Stomach (tissue), 19 donors: ENCODE measurements at regions of chr16 and their contacts with region 1.

Region 1: GRCh38 chr16:25051406-25052150 is 36.4 kb upstream of the ARHGAP17 start:
- DNase-seq: no peak
- H3K4me3 ChIP-seq: peak overlapping the region in 3 of 4 donors; percentile 19 to 32 (median 27)
- H3K27ac ChIP-seq: peak overlapping the region in 4 of 5 donors; percentile 47 to 95 (median 78)
- H3K4me1 ChIP-seq: peaks cover 17 to 57% (median 30%) of the 10 kb centered on the region in 4 donors
- H3K27me3 ChIP-seq: no peaks in the 10 kb centered on the region
- CTCF ChIP-seq: no peak
- EP300 ChIP-seq: no peak
- POLR2A ChIP-seq: no peak

Region 2: DNA sequence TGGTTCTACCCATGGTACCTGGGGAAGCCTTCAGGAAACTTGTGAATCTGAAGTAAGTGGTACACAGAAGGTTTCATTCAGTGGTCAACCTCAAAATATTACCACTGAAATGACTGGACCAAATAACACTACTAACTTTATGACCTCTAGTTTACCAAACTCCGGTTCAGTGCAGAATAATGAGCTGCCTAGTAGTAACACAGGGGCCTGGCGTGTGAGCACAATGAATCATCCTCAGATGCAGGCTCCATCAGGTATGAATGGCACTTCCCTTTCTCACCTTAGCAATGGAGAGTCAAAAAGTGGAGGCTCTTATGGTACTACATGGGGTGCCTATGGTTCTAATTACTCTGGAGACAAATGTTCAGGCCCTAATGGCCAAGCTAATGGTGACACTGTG is 261.7 kb before region 1 on chr16:
- intact Hi-C with region 1: no loop called
- DNase-seq: no peak
- H3K4me3 ChIP-seq: no peak overlapping the region
- H3K27ac ChIP-seq: no peak overlapping the region
- H3K4me1 ChIP-seq: no peaks in the 10 kb centered on the region
- H3K27me3 ChIP-seq: no peaks in the 10 kb centered on the region
- CTCF ChIP-seq: no peak
- EP300 ChIP-seq: no peak
- POLR2A ChIP-seq: no peak

Region 3: DNA sequence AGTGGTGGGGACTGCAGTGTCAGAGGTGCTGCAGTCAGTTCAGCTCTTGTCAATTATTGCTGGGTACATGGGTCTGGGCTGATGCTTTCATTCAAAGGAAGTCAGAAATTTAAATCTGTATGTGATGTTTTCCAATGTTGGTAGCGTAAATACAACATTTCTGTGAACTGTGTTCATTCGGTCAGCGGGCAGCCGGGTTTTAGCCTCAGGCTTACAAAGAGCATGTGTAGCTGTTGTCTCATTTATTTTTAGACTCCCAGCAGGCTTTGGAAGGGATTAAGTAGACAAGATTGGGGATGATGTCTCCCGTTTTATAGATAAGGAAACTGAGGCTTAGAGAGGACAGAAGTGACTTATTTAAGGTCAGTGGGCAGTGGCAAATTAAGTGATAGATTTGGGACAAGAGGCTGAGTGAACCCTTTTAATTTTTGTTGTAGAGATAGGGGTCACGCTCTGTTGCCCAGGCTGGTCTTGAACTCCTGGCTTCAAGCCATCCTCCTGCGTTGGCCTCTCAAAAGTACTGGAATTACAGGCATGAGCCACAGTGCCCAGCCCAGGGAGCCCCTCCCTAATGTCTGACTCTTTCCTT is 173.2 kb after region 1 on chr16:
- intact Hi-C with region 1: loop called (anchors 5 kb)
- DNase-seq: no peak
- H3K4me3 ChIP-seq: no peak overlapping the region
- H3K27ac ChIP-seq: no peak overlapping the region
- H3K4me1 ChIP-seq: peaks cover 0 to 11% (median 0%) of the 10 kb centered on the region in 4 donors
- H3K27me3 ChIP-seq: no peaks in the 10 kb centered on the region
- CTCF ChIP-seq: no peak
- EP300 ChIP-seq: no peak
- POLR2A ChIP-seq: no peak